ENCODE measurements at regions of chr17 and their contacts with region 1.

Region 1: GRCh38 chr17:75289115-75289831 is at the start of gene SLC25A19:
- DNase-seq: peak; percentile 80 to 98 (median 95)
- ATAC-seq: peak; percentile 96
- H3K4me3 ChIP-seq: peak within 1 kb of the TSS; percentile 84
- H3K4me3 Mint-ChIP-seq: peak within 1 kb of the TSS; percentile 96 to 100 (median 100)
- H3K27ac ChIP-seq: peak within 1 kb of the TSS; percentile 90
- H3K27ac Mint-ChIP-seq: peak within 1 kb of the TSS; percentile 99 to 100 (median 100)
- H3K4me1 ChIP-seq: peaks cover 0 to 6% of the 10 kb centered on the region in 2 donors
- H3K4me1 Mint-ChIP-seq: peaks cover 6 to 28% (median 15%) of the 10 kb centered on the region in 7 donors
- H3K27me3 ChIP-seq: no peaks in the 10 kb centered on the region
- H3K27me3 Mint-ChIP-seq: peaks cover 0 to 2% (median 0%) of the 10 kb centered on the region in 5 donors
- total RNA-seq, gene SLC25A19: 15.6 to 42.5 (median 21.1) TPM

Region 2: DNA sequence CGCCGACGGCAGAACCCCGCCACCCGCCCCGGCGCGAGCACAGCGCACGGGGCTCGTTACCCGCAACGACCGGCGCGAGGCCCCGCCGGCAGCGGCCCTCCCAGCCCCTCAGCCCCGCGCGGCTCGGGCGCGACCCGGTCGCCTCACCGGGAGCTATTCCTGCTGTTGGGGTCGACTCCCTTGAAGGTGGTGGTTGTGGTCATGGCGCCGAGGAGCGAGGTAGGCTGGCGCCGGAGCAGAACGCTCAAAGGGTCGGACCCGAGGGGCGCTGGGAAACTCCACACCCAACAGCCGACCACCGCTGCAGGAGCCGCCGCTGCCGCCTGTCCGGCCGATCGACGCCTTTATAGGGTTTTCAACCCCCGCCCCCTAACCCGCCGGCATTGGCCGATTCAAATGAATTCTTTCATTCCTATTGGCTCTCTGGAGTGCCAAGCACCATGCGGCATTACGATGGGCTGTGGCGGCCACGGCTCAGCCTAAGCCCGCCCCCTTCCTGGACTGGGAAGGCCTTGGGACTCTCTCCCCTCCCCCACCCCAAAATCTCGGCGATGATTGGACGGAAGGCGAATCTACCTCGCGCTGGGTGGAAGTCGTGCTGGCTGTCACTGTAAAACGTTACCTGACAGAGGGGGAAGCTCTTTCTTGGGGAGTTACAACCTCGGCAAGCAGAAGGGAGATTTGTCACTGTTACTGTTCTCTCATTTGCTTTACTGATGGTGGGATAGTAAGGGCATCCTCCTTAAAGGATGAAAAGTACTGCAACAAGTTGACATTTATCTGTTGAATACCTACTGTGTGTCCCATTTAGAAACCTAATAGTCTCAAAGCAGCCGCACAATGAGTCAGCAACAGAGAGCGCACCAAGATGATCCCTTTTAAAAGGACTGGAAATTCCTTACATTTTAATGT is 134.8 kb before region 1 on chr17 and contains the start of gene JPT1:
- CTCF ChIA-PET with region 1: no interaction called
- POLR2A ChIA-PET with region 1: interaction called, 3 read pairs
- intact Hi-C with region 1: loop called (anchors 1 kb)
- DNase-seq: peak; percentile 82 to 98 (median 96)
- ATAC-seq: peak; percentile 100
- H3K4me3 ChIP-seq: peak within 1 kb of the TSS; percentile 84
- H3K4me3 Mint-ChIP-seq: peak within 1 kb of the TSS; percentile 88 to 98 (median 94)
- H3K27ac ChIP-seq: peak within 1 kb of the TSS; percentile 80
- H3K27ac Mint-ChIP-seq: peak within 1 kb of the TSS; percentile 78 to 96 (median 92)
- H3K4me1 ChIP-seq: peaks cover 0 to 18% of the 10 kb centered on the region in 2 donors
- H3K4me1 Mint-ChIP-seq: peaks cover 11 to 39% (median 36%) of the 10 kb centered on the region in 7 donors
- H3K27me3 ChIP-seq: no peaks in the 10 kb centered on the region
- H3K27me3 Mint-ChIP-seq: no peaks in the 10 kb centered on the region
- total RNA-seq, gene JPT1: 12.3 to 227 (median 29.3) TPM

Region 3: DNA sequence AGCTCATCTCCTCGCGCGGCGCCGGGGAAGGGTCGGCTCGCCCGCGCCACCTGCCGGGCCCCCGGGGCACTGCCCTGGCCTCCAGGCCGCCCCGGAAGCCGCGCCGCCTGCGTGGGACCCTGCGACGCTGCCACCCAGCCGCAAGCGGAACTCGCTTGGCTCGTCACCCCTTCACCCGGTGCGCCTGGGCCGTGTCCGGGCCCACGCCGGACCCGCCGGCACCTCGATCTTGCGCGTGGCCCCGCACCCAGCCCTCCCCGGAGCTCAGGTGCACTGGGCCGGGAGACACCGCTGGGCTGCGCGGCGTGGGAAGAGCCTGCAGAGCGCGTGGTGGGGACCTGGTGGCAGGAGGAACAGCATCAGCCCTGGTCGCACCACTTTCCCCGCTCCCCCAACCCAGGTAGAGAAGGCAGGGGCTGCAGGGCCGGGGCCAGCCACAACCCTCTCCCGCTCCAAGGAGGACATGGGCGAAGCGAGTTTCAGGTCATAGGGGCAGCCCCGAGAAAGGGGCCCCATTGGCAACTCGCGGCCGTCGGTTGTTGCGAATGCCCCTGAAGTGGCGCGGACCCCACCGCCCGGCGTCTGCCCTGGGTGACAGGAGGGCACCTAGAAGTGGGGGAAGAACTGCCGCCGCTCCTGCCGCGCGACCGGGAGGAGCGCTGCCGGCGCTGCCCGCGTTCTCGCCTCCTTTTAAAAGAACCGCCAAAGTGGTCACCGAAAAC is 17.9 kb before region 1 on chr17:
- CTCF ChIA-PET with region 1: interaction called, 8 read pairs
- POLR2A ChIA-PET with region 1: interaction called, 73 read pairs
- intact Hi-C with region 1: loop called (anchors 1 kb)
- DNase-seq: peak; percentile 80 to 96 (median 90)
- ATAC-seq: peak; percentile 96
- H3K4me3 ChIP-seq: peak overlapping the region; percentile 75
- H3K4me3 Mint-ChIP-seq: peak overlapping the region; percentile 67 to 87 (median 84)
- H3K27ac ChIP-seq: peak overlapping the region; percentile 84
- H3K27ac Mint-ChIP-seq: peak overlapping the region; percentile 57 to 90 (median 85)
- H3K4me1 ChIP-seq: peaks cover 15 to 24% of the 10 kb centered on the region in 2 donors
- H3K4me1 Mint-ChIP-seq: peaks cover 5 to 41% (median 34%) of the 10 kb centered on the region in 7 donors
- H3K27me3 ChIP-seq: no peaks in the 10 kb centered on the region
- H3K27me3 Mint-ChIP-seq: no peaks in the 10 kb centered on the region

Region 4: GRCh38 chr17:75433218-75433783 is 144.0 kb after region 1 on chr17:
- CTCF ChIA-PET with region 1: no interaction called
- POLR2A ChIA-PET with region 1: no interaction called
- intact Hi-C with region 1: no loop called
- DNase-seq: no peak
- ATAC-seq: no peak
- H3K4me3 ChIP-seq: no peak overlapping the region
- H3K4me3 Mint-ChIP-seq: no peak overlapping the region
- H3K27ac ChIP-seq: no peak overlapping the region
- H3K27ac Mint-ChIP-seq: no peak overlapping the region
- H3K4me1 ChIP-seq: peaks cover 0 to 15% of the 10 kb centered on the region in 2 donors
- H3K4me1 Mint-ChIP-seq: peaks cover 0 to 14% (median 5%) of the 10 kb centered on the region in 7 donors
- H3K27me3 ChIP-seq: no peaks in the 10 kb centered on the region
- H3K27me3 Mint-ChIP-seq: peaks cover 0 to 39% (median 4%) of the 10 kb centered on the region in 5 donors

Region 5: GRCh38 chr17:75456417-75457046 is 167.3 kb after region 1 on chr17 and contains the start of gene TMEM94:
- CTCF ChIA-PET with region 1: no interaction called
- POLR2A ChIA-PET with region 1: interaction called, 8 read pairs
- intact Hi-C with region 1: loop called (anchors 1 kb)
- DNase-seq: peak; percentile 70 to 93 (median 89)
- ATAC-seq: peak; percentile 98
- H3K4me3 ChIP-seq: peak within 1 kb of the TSS; percentile 99
- H3K4me3 Mint-ChIP-seq: peak within 1 kb of the TSS; percentile 92 to 99 (median 94)
- H3K27ac ChIP-seq: peak within 1 kb of the TSS; percentile 74
- H3K27ac Mint-ChIP-seq: peak within 1 kb of the TSS; percentile 84 to 99 (median 93)
- H3K4me1 ChIP-seq: peaks cover 10% of the 10 kb centered on the region in 2 donors
- H3K4me1 Mint-ChIP-seq: peaks cover 25 to 42% (median 34%) of the 10 kb centered on the region in 7 donors
- H3K27me3 ChIP-seq: no peaks in the 10 kb centered on the region
- H3K27me3 Mint-ChIP-seq: no peaks in the 10 kb centered on the region
- total RNA-seq, gene TMEM94: 74.1 to 97.2 (median 81.9) TPM

Region 6: DNA sequence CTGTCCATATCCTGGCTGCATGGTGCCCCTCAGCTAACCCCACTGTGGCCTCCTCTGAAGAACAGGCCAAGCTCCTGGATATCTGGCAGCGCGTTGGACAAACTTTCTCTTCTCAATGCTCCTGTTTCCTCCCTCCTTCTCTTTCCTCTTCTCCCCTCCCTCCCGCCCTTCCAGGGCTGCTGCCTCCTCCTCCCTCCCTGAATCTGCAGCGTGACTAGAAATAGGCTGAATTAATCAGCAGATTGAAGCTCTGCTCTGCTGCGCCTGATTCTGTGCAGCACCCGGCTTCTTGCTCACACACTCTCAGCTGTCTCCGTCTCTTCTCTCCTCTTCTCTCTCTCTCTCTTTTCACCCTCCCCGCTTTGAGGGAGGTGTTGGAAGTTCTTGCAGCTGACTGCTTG is 187.0 kb after region 1 on chr17:
- CTCF ChIA-PET with region 1: no interaction called
- POLR2A ChIA-PET with region 1: no interaction called
- intact Hi-C with region 1: no loop called
- DNase-seq: no peak
- ATAC-seq: no peak
- H3K4me3 ChIP-seq: no peak overlapping the region
- H3K4me3 Mint-ChIP-seq: no peak overlapping the region
- H3K27ac ChIP-seq: no peak overlapping the region
- H3K27ac Mint-ChIP-seq: peak overlapping the region in 4 of 9 donors; percentile 38 to 86 (median 60)
- H3K4me1 ChIP-seq: no peaks in the 10 kb centered on the region
- H3K4me1 Mint-ChIP-seq: peaks cover 0 to 12% (median 5%) of the 10 kb centered on the region in 7 donors
- H3K27me3 ChIP-seq: no peaks in the 10 kb centered on the region
- H3K27me3 Mint-ChIP-seq: no peaks in the 10 kb centered on the region

Region 7: GRCh38 chr17:75589012-75589918 is 300.0 kb after region 1 on chr17:
- CTCF ChIA-PET with region 1: no interaction called
- POLR2A ChIA-PET with region 1: interaction called, 6 read pairs
- intact Hi-C with region 1: loop called in 1 of 2 experiments (anchors 1 kb)
- DNase-seq: peak; percentile 81 to 98 (median 93)
- ATAC-seq: peak; percentile 94
- H3K4me3 ChIP-seq: peak overlapping the region; percentile 53
- H3K4me3 Mint-ChIP-seq: peak overlapping the region; percentile 57 to 95 (median 82)
- H3K27ac ChIP-seq: peak overlapping the region; percentile 83
- H3K27ac Mint-ChIP-seq: peak overlapping the region in 6 of 9 donors; percentile 59 to 95 (median 86)
- H3K4me1 ChIP-seq: peaks cover 0 to 2% of the 10 kb centered on the region in 2 donors
- H3K4me1 Mint-ChIP-seq: peaks cover 0 to 17% (median 11%) of the 10 kb centered on the region in 7 donors
- H3K27me3 ChIP-seq: no peaks in the 10 kb centered on the region
- H3K27me3 Mint-ChIP-seq: peaks cover 0 to 31% (median 0%) of the 10 kb centered on the region in 5 donors

Region 8: GRCh38 chr17:75978938-75979704 is 689.8 kb after region 1 on chr17 and contains the starts of genes ACOX1 and TEN1:
- CTCF ChIA-PET with region 1: no interaction called
- POLR2A ChIA-PET with region 1: no interaction called
- intact Hi-C with region 1: loop called in 1 of 2 experiments (anchors 1 kb)
- DNase-seq: peak; percentile 84 to 96 (median 93)
- ATAC-seq: peak; percentile 95
- H3K4me3 ChIP-seq: peak within 1 kb of the TSS; percentile 89
- H3K4me3 Mint-ChIP-seq: peak within 1 kb of the TSS; percentile 91 to 99 (median 98)
- H3K27ac ChIP-seq: peak within 1 kb of the TSS; percentile 100
- H3K27ac Mint-ChIP-seq: peak within 1 kb of the TSS; percentile 98 to 100 (median 100)
- H3K4me1 ChIP-seq: peaks cover 5 to 6% of the 10 kb centered on the region in 2 donors
- H3K4me1 Mint-ChIP-seq: peaks cover 26 to 53% (median 47%) of the 10 kb centered on the region in 7 donors
- H3K27me3 ChIP-seq: no peaks in the 10 kb centered on the region
- H3K27me3 Mint-ChIP-seq: no peaks in the 10 kb centered on the region
- total RNA-seq, gene ACOX1: 22.8 to 35.0 (median 33.5) TPM
- total RNA-seq, gene TEN1: 13.1 to 20.1 (median 13.8) TPM

Measured in naive thymus-derived CD4-positive, alpha-beta T cell (primary cell).